Activated T-helper 2 cell treated with anti-CD3 and anti-CD28 coated beads, Interferon-gamma antibody, Interleukin-2, Interleukin-4, amounts not matched to agents 10 μg/mL and 5 μg/mL and 100 μg/mL, durations not matched to agents 14 hours and 24 hours and 36 hours (primary cell): ENCODE measurements at regions of chr9 and their contacts with region 1.

Region 1: GRCh38 chr9:112333639-112334431 is 416 bp upstream of the PTBP3 start:
- DNase-seq: peak; percentile 87
- H3K4me3 Mint-ChIP-seq: peak overlapping the region; percentile 84
- H3K27ac Mint-ChIP-seq: peak overlapping the region; percentile 94
- H3K4me1 Mint-ChIP-seq: peaks cover 33% of the 10 kb centered on the region
- H3K27me3 Mint-ChIP-seq: no peaks in the 10 kb centered on the region

Region 2: DNA sequence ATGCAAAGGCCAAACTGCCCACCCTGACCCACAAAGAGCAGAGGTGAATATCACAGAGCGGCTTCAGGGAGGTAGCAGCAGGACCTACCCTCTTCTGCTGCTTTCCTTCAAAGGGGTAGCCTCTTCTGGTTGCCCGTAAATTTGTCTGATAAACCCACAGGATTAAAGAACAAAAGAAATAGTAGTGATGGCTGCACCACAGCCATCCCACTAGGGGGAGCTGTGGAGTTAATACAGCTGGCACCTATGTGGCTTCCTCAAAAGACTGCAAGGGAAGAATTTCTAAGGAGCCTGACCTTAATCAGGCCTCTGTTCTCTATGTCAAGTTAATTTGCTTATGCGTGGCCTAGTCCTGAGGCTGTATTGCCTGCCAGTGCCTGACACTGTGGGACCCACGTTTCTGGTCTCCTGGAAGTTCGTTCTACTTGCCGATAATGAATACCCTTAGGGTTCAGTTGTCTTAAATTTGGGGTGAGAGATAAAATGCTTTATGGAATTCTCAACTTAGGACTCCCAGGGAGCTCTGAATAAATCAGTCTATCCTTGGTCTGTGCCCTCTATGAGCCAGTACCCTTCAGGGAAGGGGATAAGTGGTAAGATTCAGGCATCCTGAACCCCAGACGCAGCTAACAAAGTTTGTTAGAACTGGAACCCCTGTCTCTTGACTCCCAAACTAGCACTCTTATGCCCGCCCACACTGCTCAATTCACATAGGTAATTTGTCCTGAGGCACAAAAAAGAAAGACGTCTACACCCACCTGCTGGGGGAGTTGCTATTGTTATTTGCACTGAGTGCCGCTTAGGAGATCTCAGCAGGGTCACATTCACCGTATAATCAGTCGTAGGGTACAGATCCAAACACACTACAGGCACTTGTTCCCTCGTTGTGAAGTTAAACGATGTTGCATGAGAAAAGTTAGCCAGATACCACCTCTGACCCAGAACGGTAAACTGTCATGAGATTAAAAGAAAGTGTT is 235.8 kb before region 1 on chr9:
- intact Hi-C with region 1: loop called (anchors 1 kb)
- DNase-seq: peak; percentile 59
- H3K4me3 Mint-ChIP-seq: no peak overlapping the region
- H3K27ac Mint-ChIP-seq: no peak overlapping the region
- H3K4me1 Mint-ChIP-seq: peaks cover 27% of the 10 kb centered on the region
- H3K27me3 Mint-ChIP-seq: no peaks in the 10 kb centered on the region

Region 3: GRCh38 chr9:112218908-112219307 is 114.9 kb before region 1 on chr9:
- intact Hi-C with region 1: loop called (anchors 2 kb)
- DNase-seq: peak; percentile 13
- H3K4me3 Mint-ChIP-seq: no peak overlapping the region
- H3K27ac Mint-ChIP-seq: peak overlapping the region; percentile 80
- H3K4me1 Mint-ChIP-seq: peaks cover 35% of the 10 kb centered on the region
- H3K27me3 Mint-ChIP-seq: no peaks in the 10 kb centered on the region

Region 4: DNA sequence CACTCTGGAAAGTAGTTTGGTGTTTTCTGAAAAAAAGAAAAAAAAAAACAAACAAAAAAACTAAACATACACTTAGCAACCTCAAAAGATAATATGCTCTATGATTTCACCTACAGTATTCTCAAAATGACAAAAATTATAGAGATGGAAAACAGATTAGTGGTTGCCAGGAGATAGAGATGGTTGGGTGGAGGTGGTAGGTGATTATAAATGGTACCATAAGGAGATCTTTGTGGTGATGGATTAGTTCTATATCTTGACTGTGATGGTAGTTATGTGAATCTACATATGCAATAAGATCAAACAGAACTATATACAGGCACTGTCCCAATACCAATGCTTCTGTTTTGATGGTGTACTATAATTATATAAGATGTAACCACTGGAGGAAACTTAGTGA is 32.4 kb before region 1 on chr9:
- intact Hi-C with region 1: loop called (anchors 1 kb)
- DNase-seq: no peak
- H3K4me3 Mint-ChIP-seq: no peak overlapping the region
- H3K27ac Mint-ChIP-seq: peak overlapping the region; percentile 3
- H3K4me1 Mint-ChIP-seq: peaks cover 23% of the 10 kb centered on the region
- H3K27me3 Mint-ChIP-seq: no peaks in the 10 kb centered on the region

Region 5: DNA sequence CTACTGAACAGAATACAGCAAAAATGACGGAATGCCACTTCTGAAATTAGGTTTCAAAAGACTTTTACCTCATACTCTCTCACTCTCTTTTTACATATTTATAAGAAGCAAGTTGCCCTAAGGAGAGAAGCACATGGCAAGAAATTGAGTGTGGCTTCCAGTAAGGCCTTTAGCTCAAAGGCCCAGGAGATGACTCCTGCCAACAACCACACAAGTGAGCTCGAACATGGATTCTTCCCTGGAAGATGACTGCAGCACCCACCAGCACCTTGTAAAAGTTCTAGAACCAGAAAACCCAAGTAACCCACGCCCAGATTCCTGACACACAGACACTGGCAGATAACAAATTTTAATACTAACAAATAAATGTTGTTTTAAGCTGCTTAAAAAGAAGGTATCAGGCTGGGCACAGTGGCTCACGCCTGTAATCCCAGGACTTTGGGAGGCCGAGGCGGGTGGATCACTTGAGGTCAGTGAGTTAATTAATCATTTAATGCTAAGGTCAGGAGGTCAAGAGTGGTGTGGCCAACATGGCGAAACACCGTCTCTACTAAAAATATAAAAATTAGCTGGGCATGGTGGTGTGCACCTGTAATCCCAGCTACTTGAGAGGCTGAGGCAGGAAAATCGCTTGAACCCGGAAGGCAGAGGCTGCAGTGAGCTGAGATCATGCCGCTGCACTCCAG is 17.4 kb before region 1 on chr9:
- intact Hi-C with region 1: no loop called
- DNase-seq: no peak
- H3K4me3 Mint-ChIP-seq: peak overlapping the region; percentile 23
- H3K27ac Mint-ChIP-seq: peak overlapping the region; percentile 81
- H3K4me1 Mint-ChIP-seq: peaks cover 50% of the 10 kb centered on the region
- H3K27me3 Mint-ChIP-seq: no peaks in the 10 kb centered on the region

Region 6: DNA sequence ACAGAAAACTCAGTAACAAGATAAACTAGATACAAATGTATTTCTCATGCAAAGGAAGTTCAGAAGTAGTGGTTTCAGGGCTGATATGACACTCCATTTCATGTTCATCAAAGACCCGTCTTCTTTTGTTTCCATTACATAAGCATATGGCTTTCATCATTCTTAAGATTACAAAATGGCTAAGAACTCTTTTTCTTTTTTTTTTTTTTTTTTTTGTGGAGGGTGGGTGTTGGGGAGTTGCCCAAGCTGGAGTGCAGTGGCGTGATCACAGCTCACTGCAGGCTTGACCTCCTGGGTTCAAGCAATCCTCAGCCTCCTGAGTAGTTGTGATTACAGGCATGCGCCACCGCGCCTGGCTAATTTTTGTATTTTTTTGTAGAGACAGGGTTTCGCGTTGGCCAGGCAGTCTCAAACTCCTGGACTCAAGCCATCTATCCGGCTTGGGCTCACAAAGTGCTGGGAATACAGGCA is 21.6 kb after region 1 on chr9:
- intact Hi-C with region 1: loop called (anchors 1 kb)
- DNase-seq: no peak
- H3K4me3 Mint-ChIP-seq: no peak overlapping the region
- H3K27ac Mint-ChIP-seq: peak overlapping the region; percentile 56
- H3K4me1 Mint-ChIP-seq: peaks cover 25% of the 10 kb centered on the region
- H3K27me3 Mint-ChIP-seq: peaks cover 2% of the 10 kb centered on the region

Region 7: DNA sequence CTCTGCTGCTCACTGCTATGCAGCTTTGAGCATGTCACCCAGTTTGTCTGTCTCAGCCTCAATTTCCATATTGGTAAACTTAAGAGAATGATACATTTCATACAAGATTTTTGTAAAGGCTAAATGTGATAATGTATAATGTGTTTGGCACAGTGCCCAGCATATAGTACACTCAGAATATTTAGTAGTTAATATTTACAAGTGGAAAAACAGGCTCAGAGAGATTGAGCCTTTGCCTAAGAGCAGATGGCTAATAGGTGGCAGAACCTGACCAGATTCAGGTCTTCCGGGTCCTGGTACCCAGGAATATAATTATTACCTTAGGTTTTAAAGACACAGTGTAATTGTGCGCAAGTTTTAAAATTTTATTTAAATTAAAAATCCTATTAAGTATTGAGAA is 106.0 kb after region 1 on chr9:
- intact Hi-C with region 1: no loop called
- DNase-seq: no peak
- H3K4me3 Mint-ChIP-seq: no peak overlapping the region
- H3K27ac Mint-ChIP-seq: no peak overlapping the region
- H3K4me1 Mint-ChIP-seq: no peaks in the 10 kb centered on the region
- H3K27me3 Mint-ChIP-seq: no peaks in the 10 kb centered on the region